Posterior vena cava (tissue), 2 donors: ENCODE measurements at regions of chr2 and their contacts with region 1.

Region 1: DNA sequence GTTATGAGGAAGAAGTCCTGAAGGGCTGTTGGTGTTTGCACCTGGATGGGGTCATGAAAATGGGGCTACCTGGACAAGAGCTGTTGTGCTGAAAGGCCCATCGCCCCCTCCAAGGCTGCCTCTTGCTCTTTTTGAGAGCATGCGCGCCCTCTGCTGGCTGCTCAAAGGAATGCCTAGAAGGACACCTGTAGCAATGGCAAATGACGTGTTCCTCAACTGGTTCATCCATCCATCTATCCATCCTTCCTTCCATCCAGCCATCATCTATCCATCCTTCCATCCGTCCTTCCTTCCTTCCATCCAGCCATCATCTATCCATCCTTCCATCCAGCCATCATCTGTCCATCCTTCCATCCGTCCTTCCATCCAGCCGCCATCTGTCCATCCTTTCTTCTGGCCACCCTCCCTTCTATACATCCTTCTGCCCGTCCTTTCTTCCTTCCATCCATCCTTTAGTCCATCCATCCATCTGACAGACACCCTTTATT is 17.2 kb upstream of the RPL31 start:
- DNase-seq: peak; percentile 94

Region 2: DNA sequence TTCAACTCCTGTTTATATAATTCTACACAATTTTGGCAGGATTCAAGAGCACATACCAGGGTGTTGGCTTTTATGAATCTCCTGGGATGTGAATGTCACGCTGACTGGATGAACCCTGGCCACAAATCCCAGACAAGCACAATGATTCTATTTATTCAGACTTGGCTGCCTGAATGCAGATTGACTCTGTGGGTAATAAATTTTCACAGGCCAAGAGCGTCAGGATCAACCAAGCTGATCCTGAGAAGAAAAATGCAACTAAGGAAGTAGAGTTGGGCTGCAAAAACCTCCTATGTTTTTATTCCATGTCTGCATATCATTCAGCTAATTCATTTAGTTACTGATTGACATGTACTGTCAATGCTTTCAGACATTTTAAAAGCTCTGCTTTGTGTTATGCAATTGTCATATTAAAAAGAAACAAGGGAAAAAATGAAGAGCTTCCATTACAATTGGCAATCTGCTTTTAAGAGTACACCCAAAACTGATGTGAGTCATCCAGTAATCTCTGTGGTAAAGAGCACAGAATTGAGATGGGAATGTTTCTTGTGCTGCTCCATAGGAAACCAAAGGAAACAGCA is 1322.1 kb before region 1 on chr2:
- intact Hi-C with region 1: loop called in 1 of 2 experiments (anchors 5 kb)
- DNase-seq: no peak

Region 3: GRCh38 chr2:100610381-100610831 is 374.5 kb before region 1 on chr2:
- intact Hi-C with region 1: loop called (anchors 5 kb)
- DNase-seq: peak; percentile 89

Region 4: GRCh38 chr2:100730346-100730745 is 254.6 kb before region 1 on chr2:
- intact Hi-C with region 1: loop called (anchors 5 kb)
- DNase-seq: peak; percentile 86

Region 5: GRCh38 chr2:100818606-100819369 is 166.1 kb before region 1 on chr2:
- intact Hi-C with region 1: loop called in 1 of 2 experiments (anchors 5 kb)
- DNase-seq: peak; percentile 87

Region 6: GRCh38 chr2:100948942-100949811 is 35.8 kb before region 1 on chr2:
- intact Hi-C with region 1: no loop called
- DNase-seq: no peak

Region 7: GRCh38 chr2:102331311-102331980 is 1346.5 kb after region 1 on chr2:
- intact Hi-C with region 1: loop called in 1 of 2 experiments (anchors 5 kb)
- DNase-seq: no peak